ENCODE measurements at regions of chr6 and their contacts with region 1.

Region 1: DNA sequence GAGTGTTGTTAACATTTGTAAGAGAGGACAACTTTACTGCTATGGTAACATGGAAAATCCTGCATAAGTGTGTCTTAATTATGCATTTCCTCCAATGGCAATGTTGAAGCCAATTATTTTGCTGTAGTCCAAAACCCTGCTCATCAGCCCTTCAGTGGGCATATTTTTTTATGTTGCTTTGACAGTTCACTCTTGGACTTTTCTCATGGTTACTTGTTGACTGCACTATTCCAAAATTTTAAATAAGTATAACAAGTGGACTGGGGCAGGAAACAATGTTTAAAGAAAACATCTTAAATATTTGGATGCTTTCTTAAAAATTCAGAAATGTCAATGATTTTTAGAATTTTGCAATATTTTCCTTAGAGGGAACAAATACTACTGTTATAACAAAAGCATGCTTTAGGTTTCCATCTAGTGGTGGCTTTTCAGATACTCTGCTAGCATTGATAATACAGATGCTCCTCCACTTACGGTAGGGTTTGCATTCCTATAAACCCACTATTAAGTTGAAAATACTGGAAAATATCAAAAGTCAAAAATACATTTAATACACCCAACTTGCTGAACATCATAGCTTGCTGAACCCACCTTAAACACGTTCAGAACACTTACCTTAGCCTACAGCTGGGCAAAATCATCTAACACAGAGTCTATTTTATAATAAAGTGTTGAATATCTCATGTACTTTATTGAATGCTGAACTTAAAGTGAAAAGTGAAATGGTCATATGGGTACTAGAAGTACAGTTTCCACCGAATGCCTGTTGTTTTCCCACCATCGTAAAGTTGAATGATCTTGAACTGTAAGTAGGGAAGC is 86.4 kb downstream of the ADGRG6 start:
- DNase-seq: no peak
- H3K4me3 ChIP-seq: no peak overlapping the region
- CTCF ChIP-seq: peak; percentile 59

Region 2: GRCh38 chr6:142146828-142147662 is 241.2 kb before region 1 on chr6 and contains the starts of genes NMBR and VTA1:
- CTCF ChIA-PET with region 1: interaction called, 116 read pairs
- POLR2A ChIA-PET with region 1: no interaction called
- DNase-seq: peak; percentile 96
- H3K4me3 ChIP-seq: peak within 1 kb of the TSS; percentile 97
- CTCF ChIP-seq: peak; percentile 85

Region 3: DNA sequence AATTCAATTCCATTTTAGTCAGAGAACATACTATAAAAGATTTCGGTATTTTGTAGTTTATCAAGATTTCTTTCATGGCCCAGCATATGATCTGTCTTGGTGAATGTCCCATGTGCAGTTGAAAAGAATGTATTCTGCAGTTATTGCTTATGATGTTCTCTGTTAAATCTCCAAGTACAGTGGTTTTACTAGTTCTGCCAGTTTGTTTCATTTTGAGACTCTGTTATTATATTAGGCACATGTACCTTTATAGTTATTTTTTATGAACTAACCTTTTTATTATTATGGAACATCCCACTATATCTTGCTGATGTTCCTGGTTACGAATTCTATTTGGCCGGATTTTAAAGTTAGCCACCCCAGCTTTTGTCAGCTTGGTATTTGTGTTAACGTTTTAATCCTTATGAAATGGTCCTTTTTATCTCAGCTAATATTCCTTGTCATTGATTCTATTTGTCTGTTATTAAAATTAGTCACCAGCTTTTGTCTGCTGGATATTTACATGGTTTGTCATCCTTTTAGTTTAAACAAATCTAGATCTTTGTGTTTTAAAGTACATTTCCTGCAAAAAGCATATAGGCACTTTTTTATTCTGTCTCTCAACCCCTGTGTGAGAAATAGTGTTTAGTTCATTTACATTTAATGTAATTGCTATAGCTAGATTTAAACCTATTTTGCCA is 192.2 kb before region 1 on chr6:
- CTCF ChIA-PET with region 1: interaction called, 11 read pairs
- POLR2A ChIA-PET with region 1: no interaction called
- DNase-seq: no peak
- H3K4me3 ChIP-seq: no peak overlapping the region
- CTCF ChIP-seq: no peak

Measured in AG04449 (cell line).